Activated B cell treated with CpG ODN at 0.5 μM for 24 hours (primary cell): ENCODE measurements at regions of chr7 and their contacts with region 1.

Region 1: GRCh38 chr7:151519765-151520418 is at the start of gene RHEB:
- DNase-seq: peak; percentile 94
- ATAC-seq: peak; percentile 86
- H3K4me3 Mint-ChIP-seq: peak within 1 kb of the TSS; percentile 94
- H3K27ac Mint-ChIP-seq: peak within 1 kb of the TSS; percentile 98
- H3K4me1 Mint-ChIP-seq: peaks cover 39% of the 10 kb centered on the region
- H3K27me3 Mint-ChIP-seq: no peaks in the 10 kb centered on the region
- CTCF ChIP-seq: no peak
- total RNA-seq, gene RHEB: 30.5 and 32.8 TPM in 2 replicates

Region 2: GRCh38 chr7:151226875-151227782 is 292.8 kb before region 1 on chr7 and contains the start of gene ABCF2:
- CTCF ChIA-PET with region 1: no interaction called
- POLR2A ChIA-PET with region 1: interaction called, 9 read pairs
- intact Hi-C with region 1: loop called (anchors 2 kb)
- DNase-seq: peak; percentile 97
- ATAC-seq: peak; percentile 99
- H3K4me3 Mint-ChIP-seq: peak within 1 kb of the TSS; percentile 99
- H3K27ac Mint-ChIP-seq: peak within 1 kb of the TSS; percentile 91
- H3K4me1 Mint-ChIP-seq: peaks cover 41% of the 10 kb centered on the region
- H3K27me3 Mint-ChIP-seq: no peaks in the 10 kb centered on the region
- CTCF ChIP-seq: no peak
- total RNA-seq, gene ABCF2: 47.3 and 52.4 TPM in 2 replicates

Region 3: GRCh38 chr7:151472644-151473380 is 47.1 kb before region 1 on chr7:
- CTCF ChIA-PET with region 1: no interaction called
- POLR2A ChIA-PET with region 1: interaction called, 6 read pairs
- intact Hi-C with region 1: loop called (anchors 2 kb)
- DNase-seq: no peak
- ATAC-seq: peak; percentile 38
- H3K4me3 Mint-ChIP-seq: peak overlapping the region; percentile 62
- H3K27ac Mint-ChIP-seq: peak overlapping the region; percentile 57
- H3K4me1 Mint-ChIP-seq: peaks cover 27% of the 10 kb centered on the region
- H3K27me3 Mint-ChIP-seq: no peaks in the 10 kb centered on the region
- CTCF ChIP-seq: no peak

Region 4: GRCh38 chr7:151727579-151728285 is 207.8 kb after region 1 on chr7:
- CTCF ChIA-PET with region 1: no interaction called
- POLR2A ChIA-PET with region 1: no interaction called
- intact Hi-C with region 1: loop called (anchors 2 kb)
- DNase-seq: peak; percentile 44
- ATAC-seq: peak; percentile 83
- H3K4me3 Mint-ChIP-seq: peak overlapping the region; percentile 11
- H3K27ac Mint-ChIP-seq: no peak overlapping the region
- H3K4me1 Mint-ChIP-seq: peaks cover 37% of the 10 kb centered on the region
- H3K27me3 Mint-ChIP-seq: no peaks in the 10 kb centered on the region
- CTCF ChIP-seq: no peak

Region 5: DNA sequence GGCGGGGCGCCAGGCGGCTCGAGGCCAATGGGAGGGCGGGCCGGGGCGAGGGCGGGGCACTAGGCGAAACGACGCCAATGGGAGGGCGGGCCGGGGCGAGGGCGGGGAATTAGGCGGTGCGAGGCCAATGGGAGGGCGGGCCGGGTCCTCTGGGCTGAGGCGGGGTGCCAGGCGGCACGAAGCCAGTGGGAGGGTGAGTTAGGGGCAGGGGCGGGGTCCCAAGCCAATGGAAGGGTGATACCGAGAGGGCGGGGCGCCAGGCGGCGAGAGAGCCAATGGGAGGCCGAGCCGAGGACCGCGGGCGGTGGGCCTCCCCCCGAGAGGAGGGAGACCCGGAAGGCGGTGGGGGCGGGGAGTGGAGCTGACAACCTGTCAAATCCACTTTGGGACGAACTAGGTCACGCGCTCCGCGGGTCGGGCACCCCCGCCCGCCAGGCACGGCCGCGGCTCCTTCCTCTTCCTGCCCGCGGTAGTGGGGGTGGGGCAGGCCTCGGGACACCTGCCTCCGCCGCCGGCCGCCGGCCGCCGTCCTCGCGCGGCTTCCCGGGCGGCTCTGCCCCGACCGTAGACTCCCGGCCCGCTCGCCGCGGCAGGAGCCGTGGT is 943.9 kb after region 1 on chr7:
- CTCF ChIA-PET with region 1: no interaction called
- POLR2A ChIA-PET with region 1: interaction called, 5 read pairs
- intact Hi-C with region 1: loop called (anchors 5 kb)
- DNase-seq: peak; percentile 100
- ATAC-seq: peak; percentile 91
- H3K4me3 Mint-ChIP-seq: peak overlapping the region; percentile 97
- H3K27ac Mint-ChIP-seq: peak overlapping the region; percentile 53
- H3K4me1 Mint-ChIP-seq: peaks cover 26% of the 10 kb centered on the region
- H3K27me3 Mint-ChIP-seq: no peaks in the 10 kb centered on the region
- CTCF ChIP-seq: no peak

Region 6: GRCh38 chr7:152759949-152760853 is 1240.3 kb after region 1 on chr7:
- CTCF ChIA-PET with region 1: no interaction called
- POLR2A ChIA-PET with region 1: no interaction called
- intact Hi-C with region 1: loop called (anchors 5 kb)
- DNase-seq: no peak
- ATAC-seq: peak; percentile 17
- H3K4me3 Mint-ChIP-seq: peak overlapping the region; percentile 91
- H3K27ac Mint-ChIP-seq: peak overlapping the region; percentile 77
- H3K4me1 Mint-ChIP-seq: peaks cover 21% of the 10 kb centered on the region
- H3K27me3 Mint-ChIP-seq: no peaks in the 10 kb centered on the region
- CTCF ChIP-seq: no peak